ENCODE measurements at regions of chr10 and their contacts with region 1.

Region 1: DNA sequence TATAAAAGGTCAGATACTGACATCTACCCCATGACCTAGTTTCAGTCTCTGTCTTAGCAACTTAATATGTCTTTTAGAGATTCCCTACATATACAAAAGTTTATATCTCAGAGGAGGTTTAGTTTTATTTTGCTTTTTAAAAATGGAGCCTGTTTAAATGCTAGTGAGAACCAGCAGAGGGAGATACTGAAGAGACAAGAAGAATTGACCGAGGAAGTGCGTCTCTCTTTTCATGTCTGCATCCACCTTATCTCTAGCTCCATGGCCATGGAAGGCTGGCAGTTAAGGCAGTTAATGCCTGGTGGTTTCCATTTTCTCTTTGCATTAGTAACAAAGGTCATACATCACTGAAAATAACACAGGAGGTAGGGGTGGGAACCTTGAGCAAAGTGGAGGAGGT is 10.7 kb downstream of the SUV39H2 start:
- DNase-seq: no peak
- H3K4me3 ChIP-seq: no peak overlapping the region
- H3K27ac ChIP-seq: no peak overlapping the region
- H3K27me3 ChIP-seq: no peaks in the 10 kb centered on the region
- CTCF ChIP-seq: peak in 3 of 56 donors; percentile 10 to 23 (median 22)

Region 2: DNA sequence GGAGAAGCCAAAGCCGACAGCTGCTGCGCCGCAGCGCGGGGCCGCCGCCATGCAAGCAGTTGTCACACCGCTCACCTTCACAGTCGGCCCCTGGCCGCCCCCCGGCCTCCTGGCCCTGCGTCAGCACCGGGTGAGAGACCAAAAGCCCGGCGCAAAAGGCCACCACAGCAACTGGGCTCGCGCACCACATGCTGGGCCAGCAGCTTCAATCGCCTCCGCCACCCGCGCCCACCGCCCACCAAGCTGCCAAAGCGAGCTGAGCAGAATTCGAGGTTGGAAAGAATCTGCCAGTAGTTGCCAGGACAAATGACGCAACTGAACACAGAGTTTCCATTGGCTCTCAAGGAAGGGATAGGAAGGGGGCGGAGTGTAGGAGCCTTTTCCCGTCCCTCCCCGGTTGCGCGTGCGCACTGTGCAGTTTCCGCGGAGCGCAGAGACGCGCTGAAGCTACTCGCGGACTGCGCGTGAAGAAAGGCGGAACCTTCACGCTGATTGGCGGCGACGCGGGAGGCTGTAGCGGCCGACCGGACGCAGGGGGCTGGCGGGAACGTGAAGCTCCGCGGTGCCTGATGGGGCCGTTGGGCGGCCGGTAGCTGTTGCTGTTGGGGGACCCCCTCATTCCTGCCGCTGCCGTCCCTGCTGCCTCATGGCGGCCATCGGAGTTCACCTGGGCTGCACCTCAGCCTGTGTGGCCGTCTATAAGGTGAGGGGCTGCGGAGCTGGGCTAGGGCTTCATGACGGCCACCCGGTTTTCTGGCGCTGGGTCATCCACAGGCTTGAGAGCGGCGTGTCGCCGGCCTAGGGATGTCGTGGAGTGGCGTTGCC is 51.3 kb before region 1 on chr10 and contains the starts of genes CDNF, HSPA14 and MSANTD7:
- intact Hi-C with region 1: no loop called
- DNase-seq: peak; percentile 97 to 99 (median 98)
- H3K4me3 ChIP-seq: peak within 1 kb of the TSS; percentile 69 to 100 (median 96)
- H3K27ac ChIP-seq: peak within 1 kb of the TSS; percentile 66 to 99 (median 97)
- H3K27me3 ChIP-seq: no peaks in the 10 kb centered on the region
- CTCF ChIP-seq: peak in 36 of 56 donors; percentile 5 to 56 (median 33)
- total RNA-seq, gene CDNF: 0.33 to 8.1 (median 1.9) TPM in 108 of 120 experiments, not detected in the others
- total RNA-seq, gene HSPA14: 7.8 to 24.7 (median 14.3) TPM
- total RNA-seq, gene MSANTD7: 6.7 to 16.4 (median 11.0) TPM

Region 3: DNA sequence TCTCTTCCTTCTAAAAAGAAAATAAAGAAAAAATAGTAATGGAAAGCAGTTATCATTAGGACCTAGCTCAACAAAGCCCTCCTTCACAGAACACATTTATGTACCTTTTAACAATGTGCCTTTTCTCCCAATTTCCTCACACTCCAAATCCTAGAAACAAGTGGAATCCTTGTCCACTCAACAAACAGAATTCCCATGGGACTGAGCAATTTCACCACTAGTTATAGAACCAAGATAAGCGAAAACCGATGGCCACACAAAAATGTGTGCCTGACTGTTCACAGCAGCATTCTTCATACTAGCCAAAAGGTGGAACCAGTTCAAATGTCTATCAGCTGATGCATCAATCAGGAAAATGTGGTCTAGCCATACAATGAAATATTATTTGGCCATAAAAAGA is 47.3 kb after region 1 on chr10:
- intact Hi-C with region 1: no loop called
- DNase-seq: no peak
- H3K4me3 ChIP-seq: no peak overlapping the region
- H3K27ac ChIP-seq: no peak overlapping the region
- H3K27me3 ChIP-seq: no peaks in the 10 kb centered on the region
- CTCF ChIP-seq: no peak

Region 4: GRCh38 chr10:15106352-15107013 is 217.2 kb after region 1 on chr10:
- intact Hi-C with region 1: loop called in 1 of 2 experiments (anchors 10 kb)
- DNase-seq: peak; percentile 50 to 83 (median 64)
- H3K4me3 ChIP-seq: no peak overlapping the region
- H3K27ac ChIP-seq: peak overlapping the region in 1 of 59 donors; percentile 3
- H3K27me3 ChIP-seq: no peaks in the 10 kb centered on the region
- CTCF ChIP-seq: peak; percentile 67 to 92 (median 83)

Measured in dorsolateral prefrontal cortex (tissue), 120 donors.